Right ventricle myocardium inferior (tissue), 1 donor: ENCODE measurements at regions of chr11 and their contacts with region 1.

Region 1: GRCh38 chr11:130522284-130522961 is 74.0 kb downstream of the ADAMTS15 start:
- DNase-seq: peak; percentile 94
- ATAC-seq: peak; percentile 91

Region 2: GRCh38 chr11:130478204-130478701 is 44.2 kb before region 1 on chr11:
- intact Hi-C with region 1: loop called (anchors 2 kb)
- DNase-seq: no peak
- ATAC-seq: peak; percentile 70

Region 3: GRCh38 chr11:130580372-130580771 is 57.9 kb after region 1 on chr11:
- intact Hi-C with region 1: loop called (anchors 5 kb)
- DNase-seq: no peak
- ATAC-seq: peak; percentile 40

Region 4: GRCh38 chr11:130601141-130601540 is 78.7 kb after region 1 on chr11:
- intact Hi-C with region 1: loop called (anchors 5 kb)
- DNase-seq: peak; percentile 87
- ATAC-seq: peak; percentile 97

Region 5: GRCh38 chr11:130653838-130654636 is 131.6 kb after region 1 on chr11:
- intact Hi-C with region 1: loop called (anchors 2 kb)
- DNase-seq: peak; percentile 90
- ATAC-seq: peak; percentile 95

Region 6: GRCh38 chr11:130677486-130678153 is 155.2 kb after region 1 on chr11:
- intact Hi-C with region 1: loop called (anchors 2 kb)
- DNase-seq: no peak
- ATAC-seq: peak; percentile 69